ENCODE measurements at regions of chr3 and their contacts with region 1.

Region 1: DNA sequence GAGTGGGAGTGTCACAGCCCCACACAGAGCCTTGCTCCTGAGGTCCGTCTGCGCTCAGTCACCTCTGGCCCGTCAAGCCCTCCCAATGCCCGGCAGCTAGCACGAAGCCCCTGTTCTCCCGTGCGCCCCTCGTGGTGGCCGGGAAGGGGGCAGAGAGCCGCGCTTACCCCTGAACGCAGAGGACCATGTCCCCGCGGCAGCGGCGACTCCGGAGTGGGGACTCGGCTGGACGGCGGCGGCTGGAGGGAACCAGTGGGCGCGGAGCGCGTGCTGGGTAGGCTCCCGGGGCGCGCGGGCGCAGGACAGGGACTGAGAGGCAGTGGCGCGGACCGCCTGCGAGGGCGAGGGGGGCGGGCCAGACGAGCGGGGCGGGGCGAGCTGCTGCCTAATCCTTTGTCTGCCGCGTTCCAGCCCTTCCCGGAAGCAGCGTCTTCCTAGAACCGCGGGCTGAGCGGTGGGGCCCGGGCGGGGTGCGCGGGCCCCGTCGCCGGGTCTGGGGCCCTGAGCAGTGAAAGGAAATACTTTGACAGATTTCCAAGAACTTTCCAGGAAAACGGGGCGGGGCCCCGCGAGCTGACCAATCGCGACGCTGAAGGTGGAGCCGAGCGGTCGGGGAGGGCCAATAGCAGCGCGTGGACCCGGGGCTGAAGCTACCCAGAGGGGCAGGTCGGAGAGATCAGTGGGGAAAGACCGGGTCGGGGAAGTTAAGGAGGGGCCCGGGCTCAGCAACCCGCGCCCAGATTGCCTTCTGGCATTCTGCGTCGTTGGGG is at the start of gene CISH:
- DNase-seq: no peak
- H3K4me3 ChIP-seq: peak within 1 kb of the TSS; percentile 70
- CTCF ChIP-seq: peak; percentile 71

Region 2: DNA sequence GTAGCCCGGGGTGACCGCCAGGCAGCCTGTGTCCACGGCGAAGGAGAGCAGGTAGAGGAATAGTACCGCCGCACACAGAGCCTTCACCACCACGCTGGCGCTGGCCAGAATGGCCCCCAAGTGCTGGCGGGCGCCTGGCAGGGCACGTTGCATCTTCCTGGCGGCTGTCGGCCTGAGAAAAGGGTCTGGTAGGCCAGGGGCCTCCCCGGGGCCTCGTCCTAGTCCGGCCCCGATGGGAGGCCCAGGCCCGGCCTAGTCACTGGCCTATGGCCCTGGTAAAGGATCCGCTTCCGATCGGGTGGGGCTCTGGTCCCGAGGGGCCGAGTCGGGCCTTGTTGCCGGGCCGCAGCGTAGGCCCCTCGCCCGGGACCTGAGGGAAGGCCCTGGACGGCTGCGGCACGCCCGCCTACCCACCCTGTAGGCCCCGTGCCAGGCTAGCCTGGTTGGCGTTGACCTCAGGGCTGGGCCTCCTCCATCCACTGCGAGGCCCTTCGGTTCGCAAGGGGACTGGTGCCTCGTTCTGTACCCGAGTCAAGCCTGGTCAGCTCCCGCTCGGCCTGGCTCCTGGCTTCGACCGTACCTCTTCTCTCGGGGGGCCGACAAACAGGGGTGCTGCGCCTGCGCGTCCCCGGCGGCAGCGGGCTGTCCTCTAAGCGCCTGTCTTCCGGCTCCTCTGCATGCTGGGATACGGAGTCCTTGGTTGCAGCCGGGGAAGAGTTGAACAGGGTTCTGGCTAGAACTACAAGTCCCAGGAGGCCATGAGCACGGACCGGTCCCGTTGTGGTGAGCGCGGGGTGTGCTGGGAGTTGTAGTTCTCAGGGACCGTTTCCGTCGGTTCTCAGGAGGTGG is 252.5 kb before region 1 on chr3 and contains the start of gene TMEM115:
- CTCF ChIA-PET with region 1: interaction called, 12 read pairs
- POLR2A ChIA-PET with region 1: no interaction called
- DNase-seq: peak; percentile 95
- H3K4me3 ChIP-seq: peak within 1 kb of the TSS; percentile 99
- CTCF ChIP-seq: no peak

Region 3: DNA sequence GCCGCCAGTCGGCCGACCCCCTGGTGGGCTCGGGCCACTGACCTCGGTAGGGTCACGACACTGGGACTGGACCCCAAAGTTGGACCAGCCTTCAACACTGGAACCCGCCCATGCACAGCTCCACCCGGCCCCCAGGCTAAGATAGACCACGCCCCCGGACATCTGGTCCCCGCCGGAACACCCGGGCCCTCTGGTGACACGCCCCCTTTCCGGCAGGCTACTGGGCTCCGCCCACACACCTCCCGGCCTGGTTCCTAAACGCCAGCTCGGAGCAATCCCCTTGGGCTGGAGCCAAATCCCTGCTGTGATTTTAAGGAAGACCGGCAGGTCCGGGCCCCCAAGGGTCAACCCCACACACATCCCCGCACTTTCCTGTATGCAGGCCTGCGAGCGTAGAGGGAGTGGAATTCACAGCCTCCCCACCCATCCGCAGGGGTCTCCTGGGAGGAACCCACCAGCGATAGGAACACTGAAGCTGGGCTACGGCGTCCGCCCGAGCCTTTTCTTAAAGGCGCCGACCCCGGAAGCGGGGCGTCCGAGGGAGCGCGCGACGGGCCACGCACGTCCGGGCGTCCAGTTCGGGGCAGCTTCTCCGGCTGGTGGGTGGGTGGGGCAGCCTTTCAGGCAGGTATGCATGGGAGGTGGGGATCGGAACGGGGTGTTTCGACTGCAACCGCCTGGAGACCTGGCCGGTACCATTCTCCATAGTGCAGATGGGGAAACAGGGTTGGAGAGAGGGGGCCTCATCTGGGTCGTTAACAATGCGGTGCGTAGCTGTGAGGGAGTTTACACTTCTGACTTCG is 42.5 kb before region 1 on chr3 and contains the start of gene HEMK1:
- CTCF ChIA-PET with region 1: interaction called, 819 read pairs
- POLR2A ChIA-PET with region 1: interaction called, 19 read pairs
- DNase-seq: peak; percentile 54
- H3K4me3 ChIP-seq: peak within 1 kb of the TSS; percentile 97
- CTCF ChIP-seq: no peak

Region 4: DNA sequence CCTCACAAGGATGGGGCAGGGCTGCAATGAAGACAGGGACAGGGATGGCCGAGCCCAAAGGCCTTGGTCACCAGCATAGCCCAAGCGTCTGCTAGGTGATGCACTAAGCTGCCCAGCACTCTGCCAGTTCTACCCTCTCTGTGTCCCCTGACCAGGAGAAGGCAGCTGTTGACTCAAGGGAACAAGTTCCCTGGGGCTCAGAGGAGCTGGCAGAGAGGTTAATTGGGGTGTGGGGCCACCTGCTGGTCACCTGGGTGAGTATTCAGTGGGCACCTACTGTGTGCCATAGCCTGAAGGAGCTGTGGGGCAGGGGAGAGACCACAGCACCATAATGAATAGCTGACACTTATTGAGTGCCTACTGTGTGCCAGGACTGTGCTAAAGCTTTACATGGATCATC is 41.1 kb after region 1 on chr3:
- CTCF ChIA-PET with region 1: interaction called, 66 read pairs
- POLR2A ChIA-PET with region 1: no interaction called
- DNase-seq: no peak
- H3K4me3 ChIP-seq: no peak overlapping the region
- CTCF ChIP-seq: peak; percentile 13

Region 5: GRCh38 chr3:51371943-51372557 is 760.4 kb after region 1 on chr3:
- CTCF ChIA-PET with region 1: interaction called, 71 read pairs
- POLR2A ChIA-PET with region 1: no interaction called
- DNase-seq: peak; percentile 29
- H3K4me3 ChIP-seq: no peak overlapping the region
- CTCF ChIP-seq: peak; percentile 70

Region 6: DNA sequence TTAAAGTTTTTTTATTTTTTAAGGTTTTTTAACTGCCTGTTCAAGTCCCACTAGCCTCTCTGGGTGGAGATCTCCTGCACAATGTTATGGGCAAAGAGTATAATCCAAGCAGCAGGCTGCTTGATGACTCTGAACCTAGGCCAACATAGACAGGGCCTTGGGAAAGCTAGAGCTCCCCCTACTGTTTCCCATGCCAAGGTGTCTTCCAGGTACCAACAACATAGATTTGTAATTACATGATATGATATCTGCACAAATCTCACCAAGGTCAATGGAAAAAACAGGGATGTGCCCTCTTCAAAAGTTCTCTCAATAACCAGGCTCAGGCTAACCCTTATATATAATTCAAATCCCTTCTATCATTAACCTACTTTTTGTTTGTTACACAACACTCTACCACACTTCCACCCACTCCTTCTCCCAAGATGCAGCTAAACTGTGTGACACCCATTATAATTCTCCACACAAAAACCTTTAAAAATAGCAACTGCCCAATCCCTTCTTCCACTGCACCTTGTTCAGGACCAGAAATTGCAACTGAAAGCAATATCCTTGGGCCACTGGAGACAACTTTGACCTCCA is 823.2 kb after region 1 on chr3:
- CTCF ChIA-PET with region 1: interaction called, 15 read pairs
- POLR2A ChIA-PET with region 1: no interaction called
- DNase-seq: no peak
- H3K4me3 ChIP-seq: no peak overlapping the region
- CTCF ChIP-seq: peak; percentile 66

Measured in AG04449 (cell line).